Dorsolateral prefrontal cortex (tissue), 120 donors: ENCODE measurements at regions of chr5 and their contacts with region 1.

Region 1: DNA sequence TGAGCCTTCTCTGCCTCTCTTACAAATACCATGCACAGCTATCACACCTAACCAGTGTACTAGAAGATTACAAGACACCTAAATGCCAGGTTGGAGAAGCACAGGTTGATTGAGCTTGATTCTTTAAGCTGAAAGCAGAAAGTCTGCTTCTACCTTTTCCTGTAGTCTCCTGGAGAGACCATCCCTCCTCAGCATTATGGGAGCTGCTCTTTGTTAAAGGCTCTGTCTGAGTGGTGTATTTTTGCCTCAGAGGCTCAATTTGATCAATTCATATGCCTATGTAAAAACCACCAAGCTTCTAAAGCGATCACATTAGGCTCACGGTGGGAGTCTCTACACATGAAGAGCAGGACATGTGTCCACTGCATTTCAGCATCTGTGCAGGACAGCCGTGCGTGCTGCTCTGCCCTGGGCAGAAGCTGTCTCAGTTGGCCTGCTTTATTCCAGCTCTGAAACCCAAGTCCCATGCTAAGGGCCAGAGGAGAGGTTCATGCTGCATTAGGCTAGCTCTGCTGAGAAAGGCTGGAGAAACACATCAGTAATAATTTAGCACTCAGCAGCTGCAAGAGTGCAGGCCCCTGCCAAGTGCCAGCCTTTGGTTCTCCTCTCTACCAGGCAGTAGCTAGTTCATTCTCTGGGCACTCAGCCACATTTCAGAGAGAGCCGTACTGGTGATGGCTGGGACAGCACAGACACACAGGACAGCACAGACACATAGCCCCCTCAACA is 41.7 kb downstream of the TMEM167A start:
- DNase-seq: peak; percentile 60 to 97 (median 91)
- H3K4me3 ChIP-seq: peak overlapping the region in 29 of 59 donors; percentile 1 to 42 (median 20)
- H3K27ac ChIP-seq: peak overlapping the region; percentile 40 to 98 (median 94)
- H3K27me3 ChIP-seq: no peaks in the 10 kb centered on the region
- CTCF ChIP-seq: peak in 7 of 56 donors; percentile 11 to 30 (median 16)

Region 2: GRCh38 chr5:82593481-82593880 is 442.1 kb before region 1 on chr5:
- intact Hi-C with region 1: no loop called
- DNase-seq: no peak
- H3K4me3 ChIP-seq: no peak overlapping the region
- H3K27ac ChIP-seq: no peak overlapping the region
- H3K27me3 ChIP-seq: peaks cover 0 to 6% (median 0%) of the 10 kb centered on the region in 45 donors
- CTCF ChIP-seq: no peak

Region 3: GRCh38 chr5:82922086-82922734 is 113.3 kb before region 1 on chr5:
- intact Hi-C with region 1: loop called in 1 of 2 experiments (anchors 10 kb)
- DNase-seq: peak; percentile 4 to 82 (median 68)
- H3K4me3 ChIP-seq: no peak overlapping the region
- H3K27ac ChIP-seq: peak overlapping the region in 46 of 59 donors; percentile 4 to 82 (median 66)
- H3K27me3 ChIP-seq: peaks cover 0 to 4% (median 0%) of the 10 kb centered on the region in 45 donors
- CTCF ChIP-seq: peak in 9 of 56 donors; percentile 13 to 45 (median 20)

Region 4: GRCh38 chr5:82984786-82985735 is 50.5 kb before region 1 on chr5:
- intact Hi-C with region 1: no loop called
- DNase-seq: no peak
- H3K4me3 ChIP-seq: no peak overlapping the region
- H3K27ac ChIP-seq: no peak overlapping the region
- H3K27me3 ChIP-seq: no peaks in the 10 kb centered on the region
- CTCF ChIP-seq: no peak

Region 5: GRCh38 chr5:83076742-83077661 is 41.5 kb after region 1 on chr5 and contains the starts of genes TMEM167A and XRCC4:
- intact Hi-C with region 1: loop called in 1 of 2 experiments (anchors 5 kb)
- DNase-seq: peak; percentile 90 to 99 (median 98)
- H3K4me3 ChIP-seq: peak within 1 kb of the TSS; percentile 58 to 99 (median 89)
- H3K27ac ChIP-seq: peak within 1 kb of the TSS in 56 of 59 donors; percentile 21 to 93 (median 78)
- H3K27me3 ChIP-seq: no peaks in the 10 kb centered on the region
- CTCF ChIP-seq: peak in 29 of 56 donors; percentile 6 to 50 (median 29)
- total RNA-seq, gene TMEM167A: 46.0 to 89.2 (median 63.9) TPM
- total RNA-seq, gene XRCC4: 3.1 to 8.6 (median 5.2) TPM

Region 6: GRCh38 chr5:83473346-83474163 is 438.0 kb after region 1 on chr5:
- intact Hi-C with region 1: loop called in 1 of 2 experiments (anchors 5 kb)
- DNase-seq: peak; percentile 38 to 86 (median 80)
- H3K4me3 ChIP-seq: peak overlapping the region; percentile 37 to 75 (median 59)
- H3K27ac ChIP-seq: peak overlapping the region in 28 of 59 donors; percentile 8 to 75 (median 50)
- H3K27me3 ChIP-seq: peaks cover 0 to 89% (median 41%) of the 10 kb centered on the region in 45 donors
- CTCF ChIP-seq: peak; percentile 53 to 91 (median 82)